ENCODE measurements at regions of chr9 and their contacts with region 1.

Region 1: GRCh38 chr9:29826421-29826820 is 2253.1 kb upstream of the C9orf72 start:
- DNase-seq: no peak
- ATAC-seq: no peak
- H3K4me3 ChIP-seq: no peak overlapping the region
- H3K27ac ChIP-seq: no peak overlapping the region
- H3K4me1 ChIP-seq: no peaks in the 10 kb centered on the region
- H3K27me3 ChIP-seq: no peaks in the 10 kb centered on the region
- CTCF ChIP-seq: no peak

Region 2: DNA sequence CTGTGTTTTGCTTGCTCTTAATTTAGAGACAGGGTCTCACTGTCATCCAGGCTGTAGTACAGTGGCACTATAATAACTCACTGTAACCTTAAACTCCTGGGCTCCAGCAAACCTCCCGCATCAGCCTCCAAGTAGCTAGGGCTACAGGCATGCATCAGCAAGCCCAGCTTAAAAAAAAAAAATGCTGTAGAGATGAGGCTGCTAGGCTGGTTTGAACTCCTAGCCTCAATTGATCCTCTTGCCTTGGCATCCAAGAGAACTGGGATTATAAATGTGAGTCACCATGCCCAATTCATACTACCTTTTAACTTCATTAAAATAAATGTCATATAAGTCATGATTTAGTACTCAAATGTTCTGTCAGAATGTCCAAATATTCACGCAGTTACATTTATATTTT is 57.4 kb before region 1 on chr9:
- intact Hi-C with region 1: loop called in 1 of 10 experiments (anchors 10 kb)
- DNase-seq: no peak
- ATAC-seq: no peak
- H3K4me3 ChIP-seq: no peak overlapping the region
- H3K27ac ChIP-seq: no peak overlapping the region
- H3K4me1 ChIP-seq: no peaks in the 10 kb centered on the region
- H3K27me3 ChIP-seq: no peaks in the 10 kb centered on the region
- CTCF ChIP-seq: no peak

Measured in heart right ventricle (tissue), 16 donors.